Activated T-helper 2 cell treated with anti-CD3 and anti-CD28 coated beads, Interferon-gamma antibody, Interleukin-2, Interleukin-4, amounts not matched to agents 10 μg/mL and 5 μg/mL and 100 μg/mL, durations not matched to agents 14 hours and 24 hours and 36 hours (primary cell): ENCODE measurements at regions of chr2 and their contacts with region 1.

Region 1: DNA sequence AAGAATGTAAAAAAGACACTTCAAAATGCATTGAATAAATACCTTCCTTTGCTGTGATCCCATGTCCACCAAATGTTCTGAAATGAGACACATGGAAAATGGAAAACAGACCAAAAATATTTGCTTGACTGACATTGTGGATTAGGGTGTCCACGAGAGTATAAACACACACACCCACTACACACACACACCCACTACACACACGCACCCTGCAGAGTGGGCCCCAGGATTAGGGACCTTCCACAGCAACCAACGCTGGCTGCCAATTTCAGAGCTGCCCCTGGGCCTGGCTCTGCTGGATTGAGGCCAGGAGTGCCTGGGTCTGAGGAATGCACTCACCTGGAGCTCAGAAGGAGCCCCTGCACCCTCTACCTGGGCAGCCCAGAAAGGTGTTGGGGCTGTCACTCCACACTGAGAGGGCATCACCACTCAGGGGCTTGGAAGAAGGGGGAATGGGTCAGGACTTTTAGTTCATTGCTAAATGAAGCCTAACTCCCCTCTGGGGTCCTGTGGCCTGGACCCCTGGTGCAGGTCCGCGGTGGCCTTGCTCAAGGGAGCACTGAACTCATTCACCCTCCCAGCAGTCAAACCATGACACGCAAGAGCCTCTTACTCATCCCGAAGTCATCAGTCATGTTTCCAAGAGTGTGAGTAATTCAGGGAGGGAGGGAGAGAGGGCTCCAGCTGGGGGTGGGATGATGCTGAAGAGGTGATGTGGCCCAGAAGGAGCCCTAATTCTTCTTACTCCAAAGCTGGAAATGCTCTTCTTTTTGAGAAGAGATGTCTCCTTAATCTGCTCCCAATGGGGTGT is 50.2 kb upstream of the PLB1 start:
- DNase-seq: no peak
- H3K4me3 Mint-ChIP-seq: peak overlapping the region; percentile 17
- H3K27ac Mint-ChIP-seq: peak overlapping the region; percentile 74
- H3K4me1 Mint-ChIP-seq: peaks cover 67% of the 10 kb centered on the region
- H3K27me3 Mint-ChIP-seq: no peaks in the 10 kb centered on the region

Region 2: DNA sequence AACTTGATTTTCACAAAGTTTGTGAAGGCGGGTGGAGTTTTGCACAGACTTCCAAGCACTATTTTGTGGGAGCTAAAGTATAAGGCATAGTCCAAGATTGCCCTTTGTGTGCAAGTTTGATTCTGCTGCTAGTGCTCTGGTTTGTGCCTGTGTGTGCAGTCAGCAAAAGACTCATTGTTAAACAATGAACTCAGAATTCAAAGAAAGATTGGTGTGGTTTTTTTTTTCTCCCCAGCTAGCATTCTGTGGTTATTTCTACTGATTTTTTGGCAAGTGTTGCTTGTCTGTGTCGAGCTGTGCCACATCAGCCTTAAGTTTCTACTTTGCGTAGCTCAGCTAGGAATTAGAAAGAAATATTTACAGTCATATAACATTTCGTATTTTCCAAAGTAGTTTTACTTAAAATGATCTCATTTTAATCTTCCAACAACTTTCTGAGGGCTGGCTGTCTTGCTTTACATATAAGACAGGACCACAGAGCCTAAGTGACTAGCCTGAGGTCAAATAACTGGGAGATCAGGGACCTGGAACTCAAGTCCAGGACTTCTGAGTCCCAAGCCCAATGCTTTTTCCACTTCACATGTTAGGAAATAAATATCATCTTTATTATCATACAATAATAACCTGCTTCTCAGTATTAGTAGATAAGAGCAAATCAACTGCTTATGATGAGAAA is 485.3 kb before region 1 on chr2:
- intact Hi-C with region 1: loop called (anchors 5 kb)
- DNase-seq: peak; percentile 21
- H3K4me3 Mint-ChIP-seq: peak overlapping the region; percentile 27
- H3K27ac Mint-ChIP-seq: peak overlapping the region; percentile 83
- H3K4me1 Mint-ChIP-seq: peaks cover 69% of the 10 kb centered on the region
- H3K27me3 Mint-ChIP-seq: no peaks in the 10 kb centered on the region

Region 3: DNA sequence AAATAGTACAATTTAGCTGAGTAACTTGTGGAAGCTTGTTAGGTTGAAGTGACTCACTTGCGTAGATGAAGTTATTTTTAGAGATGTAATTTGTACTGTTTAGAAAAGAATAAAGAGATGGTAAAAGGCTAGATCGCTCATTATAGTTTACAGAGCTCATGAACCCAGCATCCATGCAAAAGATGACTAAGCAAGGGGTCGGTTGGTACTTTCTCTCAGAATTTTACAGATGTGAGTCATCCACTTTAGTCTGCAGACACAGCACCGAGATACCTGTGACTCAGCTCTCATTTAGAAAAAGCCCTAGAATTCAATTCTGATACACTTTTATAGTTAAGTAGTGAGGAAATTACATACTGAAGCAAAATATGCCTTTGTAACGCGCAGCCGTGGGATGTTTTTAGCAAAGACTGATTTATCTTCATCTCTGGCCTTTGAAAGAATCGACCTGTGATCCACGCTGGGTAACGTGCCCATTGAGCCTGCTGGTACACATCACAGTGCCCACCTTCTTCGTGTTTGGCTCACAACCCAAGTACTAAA is 169.5 kb before region 1 on chr2:
- intact Hi-C with region 1: loop called (anchors 5 kb)
- DNase-seq: no peak
- H3K4me3 Mint-ChIP-seq: no peak overlapping the region
- H3K27ac Mint-ChIP-seq: peak overlapping the region; percentile 41
- H3K4me1 Mint-ChIP-seq: peaks cover 48% of the 10 kb centered on the region
- H3K27me3 Mint-ChIP-seq: no peaks in the 10 kb centered on the region

Region 4: DNA sequence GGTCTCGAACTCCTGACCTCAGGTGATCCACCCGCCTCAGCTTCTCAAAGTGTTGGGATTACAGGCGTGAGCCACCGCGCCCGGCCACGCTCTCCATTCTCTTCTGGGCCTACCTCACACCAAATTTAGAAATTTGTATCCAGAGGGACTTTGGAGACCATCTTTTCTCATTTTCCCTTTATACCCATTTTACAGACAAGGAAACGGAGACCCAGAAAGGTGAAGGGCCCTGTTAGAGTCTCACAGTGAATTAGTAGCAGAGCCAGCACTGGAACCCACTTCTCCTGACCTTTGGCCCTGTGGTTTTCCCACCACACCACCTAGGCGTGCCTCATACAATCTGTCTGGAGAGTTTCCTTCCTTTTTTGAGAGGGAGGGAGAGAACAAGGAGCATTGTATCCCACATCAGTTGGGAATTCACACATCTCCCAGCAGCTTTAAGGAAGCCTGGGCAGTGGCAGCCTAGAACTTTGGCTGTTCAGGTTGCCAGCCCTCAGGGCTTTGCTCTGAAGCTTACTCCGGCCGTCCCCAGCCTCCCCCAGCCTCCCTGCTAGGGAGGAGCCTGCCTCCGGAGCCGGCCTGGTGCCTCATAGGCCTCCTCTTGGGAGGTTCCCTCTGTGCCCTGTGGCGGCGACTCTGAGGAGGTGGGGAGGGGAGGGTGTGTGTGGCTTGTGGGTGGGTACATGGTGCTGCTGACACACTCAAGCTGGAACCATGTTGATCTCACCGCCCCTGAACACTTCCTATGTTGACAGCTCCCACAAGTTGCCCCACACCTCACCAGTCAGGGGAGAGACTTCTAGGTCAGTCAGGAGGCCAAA is 39.2 kb before region 1 on chr2:
- intact Hi-C with region 1: loop called (anchors 1 kb)
- DNase-seq: peak; percentile 36
- H3K4me3 Mint-ChIP-seq: peak overlapping the region; percentile 21
- H3K27ac Mint-ChIP-seq: peak overlapping the region; percentile 72
- H3K4me1 Mint-ChIP-seq: peaks cover 70% of the 10 kb centered on the region
- H3K27me3 Mint-ChIP-seq: no peaks in the 10 kb centered on the region

Region 5: GRCh38 chr2:28423856-28424605 is 21.6 kb before region 1 on chr2:
- intact Hi-C with region 1: loop called (anchors 1 kb)
- DNase-seq: peak; percentile 33
- H3K4me3 Mint-ChIP-seq: peak overlapping the region; percentile 54
- H3K27ac Mint-ChIP-seq: peak overlapping the region; percentile 74
- H3K4me1 Mint-ChIP-seq: peaks cover 52% of the 10 kb centered on the region
- H3K27me3 Mint-ChIP-seq: no peaks in the 10 kb centered on the region

Region 6: GRCh38 chr2:28463893-28464292 is 18.2 kb after region 1 on chr2:
- intact Hi-C with region 1: loop called (anchors 1 kb)
- DNase-seq: no peak
- H3K4me3 Mint-ChIP-seq: no peak overlapping the region
- H3K27ac Mint-ChIP-seq: peak overlapping the region; percentile 38
- H3K4me1 Mint-ChIP-seq: peaks cover 42% of the 10 kb centered on the region
- H3K27me3 Mint-ChIP-seq: peaks cover 2% of the 10 kb centered on the region